ENCODE measurements at regions of chr1 and their contacts with region 1.

Region 1: GRCh38 chr1:211680752-211681327 is 5.4 kb upstream of the NEK2 start:
- DNase-seq: peak; percentile 89
- ATAC-seq: peak; percentile 90
- H3K4me3 ChIP-seq: no peak overlapping the region
- H3K4me3 Mint-ChIP-seq: peak overlapping the region; percentile 44
- H3K27ac ChIP-seq: peak overlapping the region; percentile 70 to 81
- H3K27ac Mint-ChIP-seq: peak overlapping the region; percentile 87
- H3K4me1 ChIP-seq: peaks cover 24 to 35% of the 10 kb centered on the region in 2 donors
- H3K4me1 Mint-ChIP-seq: peaks cover 52% of the 10 kb centered on the region
- H3K27me3 ChIP-seq: no peaks in the 10 kb centered on the region
- H3K27me3 Mint-ChIP-seq: no peaks in the 10 kb centered on the region
- CTCF ChIP-seq: peak; percentile 86

Region 2: GRCh38 chr1:211698161-211699026 is 17.6 kb after region 1 on chr1:
- CTCF ChIA-PET with region 1: interaction called, 155 read pairs
- POLR2A ChIA-PET with region 1: interaction called, 5 read pairs
- intact Hi-C with region 1: loop called (anchors 1 kb)
- DNase-seq: peak; percentile 76
- ATAC-seq: peak; percentile 45
- H3K4me3 ChIP-seq: peak overlapping the region in 3 of 5 experiments; percentile 21 to 44 (median 34)
- H3K4me3 Mint-ChIP-seq: peak overlapping the region; percentile 76
- H3K27ac ChIP-seq: peak overlapping the region in 1 of 2 donors; percentile 11
- H3K27ac Mint-ChIP-seq: peak overlapping the region; percentile 59
- H3K4me1 ChIP-seq: peaks cover 44 to 52% of the 10 kb centered on the region in 2 donors
- H3K4me1 Mint-ChIP-seq: peaks cover 53% of the 10 kb centered on the region
- H3K27me3 ChIP-seq: peaks cover 0 to 5% (median 0%) of the 10 kb centered on the region in 4 experiments
- H3K27me3 Mint-ChIP-seq: peaks cover 5% of the 10 kb centered on the region
- CTCF ChIP-seq: peak; percentile 97

Region 3: GRCh38 chr1:212012034-212012740 is 331.3 kb after region 1 on chr1:
- CTCF ChIA-PET with region 1: interaction called, 14 read pairs
- POLR2A ChIA-PET with region 1: no interaction called
- intact Hi-C with region 1: loop called (anchors 1 kb)
- DNase-seq: peak; percentile 68
- ATAC-seq: peak; percentile 94
- H3K4me3 ChIP-seq: no peak overlapping the region
- H3K4me3 Mint-ChIP-seq: no peak overlapping the region
- H3K27ac ChIP-seq: no peak overlapping the region
- H3K27ac Mint-ChIP-seq: no peak overlapping the region
- H3K4me1 ChIP-seq: no peaks in the 10 kb centered on the region
- H3K4me1 Mint-ChIP-seq: no peaks in the 10 kb centered on the region
- H3K27me3 ChIP-seq: no peaks in the 10 kb centered on the region
- H3K27me3 Mint-ChIP-seq: no peaks in the 10 kb centered on the region
- CTCF ChIP-seq: peak; percentile 96

Region 4: GRCh38 chr1:212070720-212071302 is 390.0 kb after region 1 on chr1:
- CTCF ChIA-PET with region 1: interaction called, 74 read pairs
- POLR2A ChIA-PET with region 1: no interaction called
- intact Hi-C with region 1: loop called (anchors 2 kb)
- DNase-seq: peak; percentile 64
- ATAC-seq: no peak
- H3K4me3 ChIP-seq: no peak overlapping the region
- H3K4me3 Mint-ChIP-seq: no peak overlapping the region
- H3K27ac ChIP-seq: no peak overlapping the region
- H3K27ac Mint-ChIP-seq: no peak overlapping the region
- H3K4me1 ChIP-seq: no peaks in the 10 kb centered on the region
- H3K4me1 Mint-ChIP-seq: no peaks in the 10 kb centered on the region
- H3K27me3 ChIP-seq: no peaks in the 10 kb centered on the region
- H3K27me3 Mint-ChIP-seq: no peaks in the 10 kb centered on the region
- CTCF ChIP-seq: peak; percentile 63

Region 5: DNA sequence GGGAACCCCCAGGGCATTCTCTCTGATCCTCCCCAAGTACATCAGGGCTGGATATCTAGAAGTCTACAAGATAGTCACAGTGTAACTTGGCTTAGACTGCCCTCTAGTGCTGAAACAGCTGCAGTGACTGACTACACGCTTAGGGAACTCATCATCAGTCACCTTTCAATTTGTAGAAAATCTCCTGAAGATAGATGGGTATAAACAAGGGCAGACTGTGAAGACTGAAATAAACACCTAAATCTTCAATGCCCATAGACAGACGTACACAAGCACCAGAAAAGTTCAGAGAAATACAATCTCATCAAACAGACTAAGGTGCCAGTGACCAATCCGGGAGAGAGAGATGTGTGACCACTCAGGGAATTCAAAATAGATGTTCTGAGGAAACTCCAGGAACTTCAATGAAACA is 687.2 kb after region 1 on chr1:
- CTCF ChIA-PET with region 1: interaction called, 27 read pairs
- POLR2A ChIA-PET with region 1: no interaction called
- intact Hi-C with region 1: loop called (anchors 10 kb)
- DNase-seq: peak; percentile 72
- ATAC-seq: peak; percentile 80
- H3K4me3 ChIP-seq: no peak overlapping the region
- H3K4me3 Mint-ChIP-seq: no peak overlapping the region
- H3K27ac ChIP-seq: no peak overlapping the region
- H3K27ac Mint-ChIP-seq: no peak overlapping the region
- H3K4me1 ChIP-seq: no peaks in the 10 kb centered on the region
- H3K4me1 Mint-ChIP-seq: peaks cover 2% of the 10 kb centered on the region
- H3K27me3 ChIP-seq: no peaks in the 10 kb centered on the region
- H3K27me3 Mint-ChIP-seq: no peaks in the 10 kb centered on the region
- CTCF ChIP-seq: peak; percentile 86